ENCODE measurements at regions of chr19 and their contacts with region 1.

Region 1: GRCh38 chr19:30669329-30670010 is 297.3 kb downstream of the ZNF536 start:
- DNase-seq: peak; percentile 55
- H3K4me3 Mint-ChIP-seq: no peak overlapping the region
- H3K27ac Mint-ChIP-seq: no peak overlapping the region
- H3K4me1 Mint-ChIP-seq: no peaks in the 10 kb centered on the region
- H3K27me3 Mint-ChIP-seq: peaks cover 29% of the 10 kb centered on the region
- CTCF ChIP-seq: peak; percentile 65

Region 2: GRCh38 chr19:30649934-30650614 is 19.4 kb before region 1 on chr19:
- CTCF ChIA-PET with region 1: interaction called, 71 read pairs
- POLR2A ChIA-PET with region 1: no interaction called
- intact Hi-C with region 1: no loop called
- DNase-seq: peak; percentile 56
- H3K4me3 Mint-ChIP-seq: no peak overlapping the region
- H3K27ac Mint-ChIP-seq: no peak overlapping the region
- H3K4me1 Mint-ChIP-seq: no peaks in the 10 kb centered on the region
- H3K27me3 Mint-ChIP-seq: no peaks in the 10 kb centered on the region
- CTCF ChIP-seq: peak; percentile 61

Region 3: GRCh38 chr19:30656520-30657100 is 12.9 kb before region 1 on chr19:
- CTCF ChIA-PET with region 1: interaction called, 71 read pairs
- POLR2A ChIA-PET with region 1: no interaction called
- intact Hi-C with region 1: no loop called
- DNase-seq: no peak
- H3K4me3 Mint-ChIP-seq: no peak overlapping the region
- H3K27ac Mint-ChIP-seq: no peak overlapping the region
- H3K4me1 Mint-ChIP-seq: no peaks in the 10 kb centered on the region
- H3K27me3 Mint-ChIP-seq: peaks cover 20% of the 10 kb centered on the region
- CTCF ChIP-seq: no peak

Region 4: GRCh38 chr19:30682999-30683536 is 13.6 kb after region 1 on chr19:
- CTCF ChIA-PET with region 1: interaction called, 61 read pairs
- POLR2A ChIA-PET with region 1: no interaction called
- intact Hi-C with region 1: no loop called
- DNase-seq: peak; percentile 63
- H3K4me3 Mint-ChIP-seq: no peak overlapping the region
- H3K27ac Mint-ChIP-seq: no peak overlapping the region
- H3K4me1 Mint-ChIP-seq: no peaks in the 10 kb centered on the region
- H3K27me3 Mint-ChIP-seq: no peaks in the 10 kb centered on the region
- CTCF ChIP-seq: peak; percentile 75

Region 5: DNA sequence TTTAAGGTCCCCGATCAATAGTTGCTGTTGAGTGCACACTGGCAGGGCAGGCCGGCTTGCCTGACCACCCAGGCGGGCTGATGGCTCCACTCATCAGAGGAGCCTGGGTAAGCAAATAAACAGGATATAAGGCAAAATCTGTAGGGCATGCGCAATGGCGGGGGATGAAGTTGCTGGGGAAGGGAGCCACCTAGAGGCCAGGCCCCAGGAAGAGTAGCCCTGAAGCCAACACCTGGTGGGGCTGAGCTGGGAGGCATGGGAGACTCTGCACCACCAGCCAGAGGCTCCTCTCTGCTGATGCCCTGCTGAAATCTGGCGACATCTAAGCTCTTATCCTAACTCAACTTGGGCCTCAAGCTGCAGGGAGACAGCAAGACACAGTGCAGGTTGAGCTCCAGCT is 27.0 kb after region 1 on chr19:
- CTCF ChIA-PET with region 1: interaction called, 10 read pairs
- POLR2A ChIA-PET with region 1: no interaction called
- intact Hi-C with region 1: no loop called
- DNase-seq: no peak
- H3K4me3 Mint-ChIP-seq: no peak overlapping the region
- H3K27ac Mint-ChIP-seq: no peak overlapping the region
- H3K4me1 Mint-ChIP-seq: no peaks in the 10 kb centered on the region
- H3K27me3 Mint-ChIP-seq: no peaks in the 10 kb centered on the region
- CTCF ChIP-seq: no peak